Keratinocyte (primary cell): ENCODE measurements at regions of chr5 and their contacts with region 1.

Region 1: GRCh38 chr5:133868946-133869518 is 99.4 kb downstream of the C5orf15 start:
- DNase-seq: peak; percentile 25
- H3K4me3 ChIP-seq: no peak overlapping the region
- H3K27ac ChIP-seq: no peak overlapping the region
- H3K4me1 ChIP-seq: peaks cover 8% of the 10 kb centered on the region
- H3K27me3 ChIP-seq: peaks cover 18% of the 10 kb centered on the region
- CTCF ChIP-seq: peak; percentile 73 to 82 (median 78)

Region 2: DNA sequence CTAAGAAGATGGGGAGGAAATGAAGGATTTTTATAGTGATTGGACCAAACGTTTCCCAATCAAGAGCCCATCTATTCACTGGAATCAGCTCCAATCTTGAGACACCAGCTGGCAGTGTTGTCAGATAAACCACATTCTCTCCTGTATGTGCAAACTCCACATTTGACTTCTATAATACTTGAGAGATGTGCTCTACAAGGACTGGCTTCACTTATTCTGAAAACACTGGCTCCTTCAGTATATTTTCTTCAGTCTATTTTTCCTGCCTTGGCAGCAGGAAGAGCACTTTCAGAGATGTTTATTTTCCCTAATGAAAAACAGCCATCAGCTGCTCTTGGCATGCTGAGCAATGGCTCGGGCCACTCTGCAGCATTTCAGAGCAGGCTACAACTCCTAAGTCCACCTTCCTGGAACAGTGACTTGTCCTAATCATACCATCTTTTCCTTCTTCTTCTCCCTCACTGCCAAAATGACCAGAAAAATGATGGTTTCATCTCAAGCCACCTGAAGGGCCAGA is 159.8 kb before region 1 on chr5:
- dilution Hi-C with region 1: no loop called
- DNase-seq: no peak
- H3K4me3 ChIP-seq: no peak overlapping the region
- H3K27ac ChIP-seq: no peak overlapping the region
- H3K4me1 ChIP-seq: peaks cover 3% of the 10 kb centered on the region
- H3K27me3 ChIP-seq: peaks cover 11% of the 10 kb centered on the region
- CTCF ChIP-seq: no peak

Region 3: GRCh38 chr5:133801955-133802751 is 66.9 kb before region 1 on chr5:
- dilution Hi-C with region 1: loop called (anchors 5 kb)
- DNase-seq: no peak
- H3K4me3 ChIP-seq: no peak overlapping the region
- H3K27ac ChIP-seq: no peak overlapping the region
- H3K4me1 ChIP-seq: no peaks in the 10 kb centered on the region
- H3K27me3 ChIP-seq: peaks cover 34% of the 10 kb centered on the region
- CTCF ChIP-seq: no peak

Region 4: GRCh38 chr5:134026521-134027268 is 157.7 kb after region 1 on chr5:
- dilution Hi-C with region 1: no loop called
- DNase-seq: no peak
- H3K4me3 ChIP-seq: no peak overlapping the region
- H3K27ac ChIP-seq: no peak overlapping the region
- H3K4me1 ChIP-seq: peaks cover 16% of the 10 kb centered on the region
- H3K27me3 ChIP-seq: no peaks in the 10 kb centered on the region
- CTCF ChIP-seq: peak; percentile 87 to 97 (median 92)